ENCODE measurements at regions of chr3 and their contacts with region 1.

Region 1: DNA sequence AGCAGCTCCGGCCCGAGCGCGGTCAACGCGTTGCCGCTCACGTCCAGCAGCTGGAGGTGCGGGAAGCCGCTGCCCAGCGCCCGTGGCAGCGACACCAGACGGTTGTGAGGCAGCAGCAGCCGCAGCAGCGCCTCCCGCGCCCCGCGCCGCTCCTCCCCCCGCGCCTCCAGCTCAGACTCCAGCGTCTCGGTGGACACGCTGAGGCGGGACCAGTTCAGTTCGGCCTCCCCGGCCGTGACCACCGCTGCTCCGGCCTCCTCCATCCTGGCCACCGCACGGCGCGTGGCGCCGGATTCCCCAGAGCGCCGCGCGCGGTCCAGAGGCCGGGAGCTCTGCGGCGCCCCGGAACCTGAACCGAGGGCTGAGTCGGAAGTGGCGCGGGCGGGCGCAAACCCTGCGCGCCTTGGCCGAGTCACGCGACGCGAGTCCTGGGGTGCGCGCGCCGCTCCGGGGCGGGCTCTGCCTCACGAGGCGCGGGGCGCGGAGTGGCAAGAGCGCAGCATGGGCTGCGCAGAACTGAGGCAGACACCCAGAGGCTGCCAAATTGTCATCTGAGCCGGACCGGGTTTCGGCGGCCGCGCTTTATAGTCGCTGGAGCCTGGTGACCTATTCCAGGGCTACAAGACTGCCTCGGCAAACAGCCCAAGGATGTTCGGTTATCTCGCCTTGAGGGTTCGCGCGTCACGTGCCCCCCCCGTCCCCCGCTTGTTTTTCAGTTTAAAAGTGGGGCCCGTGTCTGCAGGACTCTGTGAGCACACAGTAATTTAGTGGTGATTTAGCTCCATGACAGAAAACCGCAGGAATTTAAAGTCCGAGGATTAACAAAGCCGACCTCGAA is at the start of gene LRRC58:
- DNase-seq: peak; percentile 95 to 96
- ATAC-seq: peak; percentile 96 to 98 (median 96)
- H3K4me3 ChIP-seq: peak within 1 kb of the TSS; percentile 89
- H3K27ac ChIP-seq: peak within 1 kb of the TSS; percentile 94
- H3K4me1 ChIP-seq: peaks cover 16% of the 10 kb centered on the region
- H3K27me3 ChIP-seq: no peaks in the 10 kb centered on the region
- CTCF ChIP-seq: peak; percentile 24
- total RNA-seq, gene LRRC58: 5.7 to 8.4 (median 6.9) TPM

Region 2: GRCh38 chr3:120245386-120245785 is 103.8 kb before region 1 on chr3:
- intact Hi-C with region 1: loop called in 1 of 2 experiments (anchors 5 kb)
- DNase-seq: no peak
- ATAC-seq: no peak
- H3K4me3 ChIP-seq: no peak overlapping the region
- H3K27ac ChIP-seq: no peak overlapping the region
- H3K4me1 ChIP-seq: no peaks in the 10 kb centered on the region
- H3K27me3 ChIP-seq: no peaks in the 10 kb centered on the region
- CTCF ChIP-seq: no peak

Region 3: DNA sequence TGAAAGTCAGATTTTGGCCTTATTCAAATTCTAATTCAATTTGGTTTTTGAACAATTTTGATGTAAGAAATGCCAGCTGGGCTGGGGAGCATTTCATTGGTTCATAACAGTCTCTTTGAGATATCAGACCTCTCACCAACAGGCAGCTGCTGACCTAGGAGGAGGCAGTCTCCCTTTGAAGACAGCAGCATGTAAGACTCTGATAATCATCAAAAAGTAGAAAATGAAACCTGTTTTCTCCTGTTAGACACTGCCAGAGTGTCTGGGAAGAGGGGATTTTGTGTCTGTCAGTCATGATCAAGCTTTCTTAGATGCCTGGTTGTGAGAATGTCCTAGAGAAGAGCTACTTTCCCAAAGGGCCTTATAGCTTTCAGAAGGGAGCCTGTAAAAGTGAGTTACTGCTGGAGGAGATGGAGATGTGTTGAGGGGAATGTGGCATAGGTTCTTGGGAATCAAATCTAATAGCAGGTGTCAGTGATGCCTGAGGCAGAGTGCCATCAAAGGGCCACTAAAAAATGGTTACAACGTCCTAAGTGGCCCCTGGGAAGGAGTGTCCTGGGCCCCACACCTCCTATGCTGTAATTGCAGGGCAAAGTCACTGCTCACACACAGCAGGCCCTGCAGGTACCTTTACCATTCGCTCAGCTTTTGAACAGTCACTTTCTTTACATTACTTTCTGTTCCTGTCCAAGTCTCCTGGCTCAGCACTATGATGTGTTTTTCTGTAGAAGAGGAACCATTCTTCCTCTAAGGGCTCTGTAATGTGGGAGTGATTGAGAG is 58.5 kb after region 1 on chr3:
- intact Hi-C with region 1: no loop called
- DNase-seq: no peak
- ATAC-seq: no peak
- H3K4me3 ChIP-seq: no peak overlapping the region
- H3K27ac ChIP-seq: no peak overlapping the region
- H3K4me1 ChIP-seq: no peaks in the 10 kb centered on the region
- H3K27me3 ChIP-seq: no peaks in the 10 kb centered on the region
- CTCF ChIP-seq: no peak

Measured in psoas muscle (tissue), 8 donors.